ENCODE measurements at regions of chr5 and their contacts with region 1.

Region 1: DNA sequence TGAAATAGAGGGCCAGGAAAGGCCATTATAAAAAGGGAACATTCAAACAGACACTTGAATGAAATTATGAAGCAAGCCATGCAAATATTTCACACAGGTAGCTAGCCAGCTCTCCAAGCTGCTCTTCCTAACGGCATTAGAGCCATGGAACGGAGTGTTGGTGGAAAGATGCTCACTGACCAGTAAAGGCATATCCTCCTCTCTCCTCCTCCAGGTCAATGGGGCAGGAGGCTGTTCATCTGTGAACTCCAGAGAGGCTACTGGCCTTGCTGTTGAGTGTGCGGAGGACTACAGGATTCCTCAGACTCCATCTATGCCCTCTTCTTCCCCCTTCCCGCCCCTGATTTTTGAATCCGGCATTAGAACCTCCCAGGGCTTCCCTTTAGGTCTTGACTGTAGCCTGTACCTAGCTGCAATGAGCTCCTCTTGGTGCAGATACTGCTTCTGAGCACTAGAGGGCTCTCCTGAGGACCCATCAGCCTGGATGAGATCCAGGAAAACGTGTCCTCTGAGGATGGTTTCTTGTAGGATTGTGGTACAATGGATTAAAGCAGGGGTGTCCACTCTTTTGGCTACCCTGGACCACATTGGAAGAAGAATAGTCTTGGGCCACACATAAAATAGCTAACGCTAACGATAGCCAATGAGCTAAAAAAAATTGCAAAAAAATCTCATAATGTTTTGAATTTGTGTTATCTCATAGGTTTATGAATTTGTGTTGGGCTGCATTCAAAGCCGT is 162.2 kb downstream of the SREK1 start:
- DNase-seq: peak in 6 of 9 donors; percentile 10 to 31 (median 21)
- ATAC-seq: peak; percentile 75
- H3K4me3 ChIP-seq: no peak overlapping the region
- H3K4me3 Mint-ChIP-seq: no peak overlapping the region
- H3K27ac ChIP-seq: no peak overlapping the region
- H3K27ac Mint-ChIP-seq: peak overlapping the region in 1 of 9 donors; percentile 36
- H3K4me1 ChIP-seq: no peaks in the 10 kb centered on the region
- H3K4me1 Mint-ChIP-seq: peaks cover 0 to 6% (median 3%) of the 10 kb centered on the region in 7 donors
- H3K27me3 ChIP-seq: no peaks in the 10 kb centered on the region
- H3K27me3 Mint-ChIP-seq: peaks cover 0 to 22% (median 13%) of the 10 kb centered on the region in 5 donors

Region 2: GRCh38 chr5:65774346-65774745 is 531.9 kb before region 1 on chr5:
- CTCF ChIA-PET with region 1: no interaction called
- POLR2A ChIA-PET with region 1: no interaction called
- intact Hi-C with region 1: no loop called
- DNase-seq: no peak
- ATAC-seq: no peak
- H3K4me3 ChIP-seq: no peak overlapping the region
- H3K4me3 Mint-ChIP-seq: no peak overlapping the region
- H3K27ac ChIP-seq: no peak overlapping the region
- H3K27ac Mint-ChIP-seq: no peak overlapping the region
- H3K4me1 ChIP-seq: peaks cover 0 to 3% of the 10 kb centered on the region in 2 donors
- H3K4me1 Mint-ChIP-seq: peaks cover 6 to 25% (median 12%) of the 10 kb centered on the region in 7 donors
- H3K27me3 ChIP-seq: no peaks in the 10 kb centered on the region
- H3K27me3 Mint-ChIP-seq: no peaks in the 10 kb centered on the region

Region 3: GRCh38 chr5:66171349-66172344 is 134.6 kb before region 1 on chr5:
- CTCF ChIA-PET with region 1: interaction called, 5 read pairs
- POLR2A ChIA-PET with region 1: no interaction called
- intact Hi-C with region 1: loop called in 1 of 2 experiments (anchors 1 kb)
- DNase-seq: peak in 7 of 9 donors; percentile 69 to 85 (median 80)
- ATAC-seq: peak; percentile 89
- H3K4me3 ChIP-seq: no peak overlapping the region
- H3K4me3 Mint-ChIP-seq: peak overlapping the region in 6 of 10 donors; percentile 5 to 48 (median 38)
- H3K27ac ChIP-seq: peak overlapping the region; percentile 43
- H3K27ac Mint-ChIP-seq: peak overlapping the region; percentile 69 to 93 (median 90)
- H3K4me1 ChIP-seq: peaks cover 7 to 8% of the 10 kb centered on the region in 2 donors
- H3K4me1 Mint-ChIP-seq: peaks cover 9 to 39% (median 28%) of the 10 kb centered on the region in 7 donors
- H3K27me3 ChIP-seq: no peaks in the 10 kb centered on the region
- H3K27me3 Mint-ChIP-seq: no peaks in the 10 kb centered on the region

Region 4: DNA sequence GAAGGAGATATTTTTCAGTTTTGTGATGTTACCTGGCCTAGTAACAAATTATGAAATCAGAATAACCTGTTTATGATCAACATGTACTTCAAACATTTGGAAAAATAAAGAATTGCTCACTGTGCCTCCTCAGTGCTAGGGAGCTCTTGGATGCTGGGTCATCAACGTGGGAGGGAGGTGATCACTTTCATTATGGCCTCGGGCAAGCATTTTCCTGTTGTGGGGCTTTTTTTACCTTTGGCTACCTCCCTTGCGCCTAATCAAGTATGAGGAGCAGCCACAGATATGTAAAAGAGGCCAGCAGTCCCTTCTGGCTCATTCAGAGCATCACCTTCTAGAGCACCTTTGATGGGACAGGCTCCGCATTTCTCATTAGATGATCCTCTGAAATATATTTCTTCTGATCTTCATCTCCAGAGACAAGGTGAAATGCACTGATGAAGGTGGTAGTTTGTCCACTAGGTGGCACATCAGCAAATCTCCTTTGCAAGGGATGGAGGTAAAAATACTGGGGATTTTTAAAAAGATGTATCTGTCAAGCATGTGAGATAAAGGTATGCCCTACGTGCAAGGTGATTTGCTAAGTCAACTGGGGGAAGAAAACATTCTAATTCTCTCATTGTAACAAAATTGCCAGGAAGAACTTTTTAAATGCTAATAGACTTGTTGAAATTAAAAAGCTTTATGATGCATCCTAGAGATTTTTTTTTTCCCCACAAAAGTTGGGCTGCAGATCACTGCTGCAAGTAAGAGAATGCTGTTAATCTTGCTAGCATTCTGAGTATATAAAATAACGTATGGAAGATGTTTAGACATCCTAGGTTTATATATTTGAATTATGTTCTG is 508.1 kb after region 1 on chr5:
- CTCF ChIA-PET with region 1: no interaction called
- POLR2A ChIA-PET with region 1: no interaction called
- intact Hi-C with region 1: loop called in 1 of 2 experiments (anchors 5 kb)
- DNase-seq: peak in 7 of 9 donors; percentile 19 to 51 (median 36)
- ATAC-seq: peak; percentile 73
- H3K4me3 ChIP-seq: no peak overlapping the region
- H3K4me3 Mint-ChIP-seq: no peak overlapping the region
- H3K27ac ChIP-seq: no peak overlapping the region
- H3K27ac Mint-ChIP-seq: peak overlapping the region in 1 of 9 donors; percentile 7
- H3K4me1 ChIP-seq: peaks cover 0 to 3% of the 10 kb centered on the region in 2 donors
- H3K4me1 Mint-ChIP-seq: peaks cover 0 to 34% (median 0%) of the 10 kb centered on the region in 7 donors
- H3K27me3 ChIP-seq: no peaks in the 10 kb centered on the region
- H3K27me3 Mint-ChIP-seq: peaks cover 0 to 15% (median 5%) of the 10 kb centered on the region in 5 donors

Region 5: DNA sequence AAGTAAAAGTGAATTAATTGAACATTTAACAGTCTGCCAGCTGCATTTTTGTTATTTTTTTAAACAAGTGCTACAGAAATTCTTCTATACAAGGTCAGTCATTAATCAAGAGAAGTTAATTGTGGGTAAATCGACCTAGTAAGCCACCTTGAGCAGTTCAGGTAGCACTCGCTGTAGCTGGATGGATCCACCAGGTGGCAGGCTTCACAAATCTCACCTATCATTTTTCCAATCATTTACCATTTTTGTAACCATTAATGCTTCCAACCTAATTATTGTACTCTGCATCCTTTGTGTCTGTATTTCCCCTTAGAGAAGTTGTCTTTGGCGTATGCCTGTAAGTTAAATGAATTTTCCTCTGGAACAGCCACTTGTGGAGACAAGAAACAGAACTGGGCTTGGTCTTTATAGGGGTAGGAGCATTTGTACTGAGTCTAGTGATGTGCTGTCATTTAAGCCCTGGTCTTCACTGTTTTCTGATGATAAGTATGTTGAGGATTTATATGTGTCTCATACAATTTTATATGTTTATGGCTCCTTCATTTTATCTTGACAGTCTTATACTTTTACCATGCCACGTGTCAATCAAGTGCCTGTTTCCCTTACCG is 850.8 kb after region 1 on chr5:
- CTCF ChIA-PET with region 1: no interaction called
- POLR2A ChIA-PET with region 1: no interaction called
- intact Hi-C with region 1: loop called in 1 of 2 experiments (anchors 10 kb)
- DNase-seq: peak in 7 of 9 donors; percentile 28 to 64 (median 52)
- ATAC-seq: peak; percentile 75
- H3K4me3 ChIP-seq: no peak overlapping the region
- H3K4me3 Mint-ChIP-seq: peak overlapping the region in 4 of 10 donors; percentile 2 to 53 (median 48)
- H3K27ac ChIP-seq: no peak overlapping the region
- H3K27ac Mint-ChIP-seq: peak overlapping the region in 8 of 9 donors; percentile 49 to 100 (median 74)
- H3K4me1 ChIP-seq: peaks cover 41 to 42% of the 10 kb centered on the region in 2 donors
- H3K4me1 Mint-ChIP-seq: peaks cover 25 to 61% (median 55%) of the 10 kb centered on the region in 7 donors
- H3K27me3 ChIP-seq: no peaks in the 10 kb centered on the region
- H3K27me3 Mint-ChIP-seq: no peaks in the 10 kb centered on the region